ENCODE measurements at regions of chr20 and their contacts with region 1.

Region 1: DNA sequence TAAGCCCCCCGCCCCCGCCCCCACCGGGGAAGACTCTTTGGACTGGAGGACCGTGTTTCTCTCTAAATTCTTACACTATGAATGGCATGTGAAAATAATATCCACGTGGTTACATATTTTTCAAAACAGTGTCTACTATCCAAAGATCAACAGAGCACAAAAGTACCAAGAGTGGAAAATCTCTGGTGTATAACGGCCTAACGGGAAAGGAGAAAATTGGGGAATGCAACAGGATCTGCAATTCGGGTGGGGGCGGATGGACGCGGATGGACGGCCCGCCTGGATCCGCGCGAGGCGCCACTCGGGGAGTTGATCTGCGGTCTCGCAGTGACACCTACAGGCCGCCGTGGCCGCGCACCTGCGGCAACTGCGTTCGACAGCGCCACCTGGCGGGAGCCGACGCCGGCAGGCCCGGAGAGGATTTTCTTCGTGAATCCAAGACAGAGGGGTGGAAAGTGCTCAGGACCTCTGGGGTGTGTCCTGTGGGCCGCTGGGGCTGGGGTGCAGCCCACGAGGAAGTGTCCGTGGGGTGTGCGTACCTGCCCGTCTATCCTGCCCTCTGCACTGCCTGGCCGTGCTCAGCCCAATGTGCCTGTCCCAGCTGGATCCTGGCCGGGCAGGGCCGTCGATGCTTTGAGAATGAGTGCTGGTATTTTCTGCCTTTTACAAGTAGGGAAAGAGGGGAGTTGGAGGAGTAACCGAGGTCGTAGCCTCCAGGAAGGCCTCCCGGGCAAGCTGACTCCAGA is 18.6 kb downstream of the ANKRD60 start:
- DNase-seq: peak; percentile 85
- H3K4me3 ChIP-seq: no peak overlapping the region
- H3K27ac ChIP-seq: no peak overlapping the region
- H3K4me1 ChIP-seq: peaks cover 0 to 8% (median 0%) of the 10 kb centered on the region in 4 donors
- H3K27me3 ChIP-seq: peaks cover 34% of the 10 kb centered on the region
- CTCF ChIP-seq: peak; percentile 100
- EP300 ChIP-seq: no peak
- POLR2A ChIP-seq: no peak

Region 2: GRCh38 chr20:57514273-57514751 is 695.5 kb before region 1 on chr20:
- in situ Hi-C with region 1: loop called (anchors 10 to 25 kb)
- intact Hi-C with region 1: no loop called
- DNase-seq: peak; percentile 79
- H3K4me3 ChIP-seq: no peak overlapping the region
- H3K27ac ChIP-seq: no peak overlapping the region
- H3K4me1 ChIP-seq: peaks cover 0 to 17% (median 0%) of the 10 kb centered on the region in 4 donors
- H3K27me3 ChIP-seq: no peaks in the 10 kb centered on the region
- CTCF ChIP-seq: peak; percentile 73 to 95 (median 75)
- EP300 ChIP-seq: no peak
- POLR2A ChIP-seq: no peak

Region 3: DNA sequence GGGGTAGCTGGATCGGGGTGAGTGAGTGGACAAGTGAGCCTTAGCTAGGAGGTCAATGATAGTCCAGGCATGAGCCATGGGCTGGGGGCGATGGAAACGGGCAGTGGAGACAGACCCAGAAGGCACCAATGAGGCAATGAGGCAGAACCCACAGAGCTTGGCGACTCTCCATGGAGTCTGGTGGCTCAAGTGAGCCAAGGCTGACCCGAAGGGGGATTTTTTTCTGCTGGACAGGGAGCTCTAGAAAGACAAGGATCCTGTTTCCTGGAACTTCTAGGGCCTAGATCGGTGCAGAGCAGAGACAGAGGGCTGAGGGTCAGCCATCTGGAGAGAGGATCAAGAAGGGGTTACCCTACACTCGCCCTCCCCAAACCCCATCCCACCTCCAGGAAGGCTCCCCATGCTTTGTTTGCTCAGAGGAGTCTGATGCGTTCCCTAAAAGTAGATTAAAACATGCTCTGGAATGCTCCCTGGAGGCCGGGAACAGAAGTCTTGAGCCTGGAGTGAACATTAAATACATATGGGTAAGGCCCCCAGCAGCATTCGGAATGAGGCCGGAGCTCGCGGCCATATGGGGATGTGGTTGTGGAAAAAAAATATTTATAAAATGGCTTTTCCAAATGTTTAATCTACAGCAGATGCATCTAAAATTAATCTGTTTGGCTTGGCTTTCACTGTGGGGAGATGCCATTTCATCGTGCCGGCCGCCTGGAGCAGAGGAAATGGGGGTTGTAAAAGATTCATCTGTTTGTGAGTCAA is 262.2 kb before region 1 on chr20:
- in situ Hi-C with region 1: no loop called
- intact Hi-C with region 1: no loop called
- DNase-seq: no peak
- H3K4me3 ChIP-seq: no peak overlapping the region
- H3K27ac ChIP-seq: peak overlapping the region in 1 of 4 donors; percentile 4
- H3K4me1 ChIP-seq: no peaks in the 10 kb centered on the region
- H3K27me3 ChIP-seq: no peaks in the 10 kb centered on the region
- CTCF ChIP-seq: no peak
- EP300 ChIP-seq: no peak
- POLR2A ChIP-seq: no peak

Measured in transverse colon (tissue), 4 donors.